ENCODE measurements at regions of chr12 and their contacts with region 1.

Region 1: DNA sequence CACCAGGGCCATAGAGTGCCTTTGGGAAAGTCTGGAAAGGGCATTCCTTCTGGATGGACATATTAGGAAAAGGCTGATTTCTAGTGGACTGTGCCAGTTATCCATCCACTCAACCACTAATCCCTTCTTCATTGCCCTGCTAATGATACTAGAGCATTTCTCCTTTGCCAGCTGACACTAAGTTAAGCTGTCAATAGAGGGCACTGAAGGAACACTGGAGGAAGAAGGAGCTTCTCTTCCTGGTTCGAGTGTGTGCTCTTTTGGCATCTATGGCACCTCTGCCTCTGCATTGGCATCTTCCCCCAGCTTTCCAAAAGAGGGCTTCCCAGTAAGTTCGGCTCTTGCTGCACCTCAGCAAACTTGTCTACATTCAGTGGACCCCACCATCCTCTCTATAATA is 165.4 kb downstream of the DERA start:
- DNase-seq: peak; percentile 90
- H3K4me3 ChIP-seq: no peak overlapping the region
- H3K27ac ChIP-seq: no peak overlapping the region
- H3K4me1 ChIP-seq: peaks cover under 1% of the 10 kb centered on the region
- H3K27me3 ChIP-seq: no peaks in the 10 kb centered on the region
- CTCF ChIP-seq: peak; percentile 84

Region 2: DNA sequence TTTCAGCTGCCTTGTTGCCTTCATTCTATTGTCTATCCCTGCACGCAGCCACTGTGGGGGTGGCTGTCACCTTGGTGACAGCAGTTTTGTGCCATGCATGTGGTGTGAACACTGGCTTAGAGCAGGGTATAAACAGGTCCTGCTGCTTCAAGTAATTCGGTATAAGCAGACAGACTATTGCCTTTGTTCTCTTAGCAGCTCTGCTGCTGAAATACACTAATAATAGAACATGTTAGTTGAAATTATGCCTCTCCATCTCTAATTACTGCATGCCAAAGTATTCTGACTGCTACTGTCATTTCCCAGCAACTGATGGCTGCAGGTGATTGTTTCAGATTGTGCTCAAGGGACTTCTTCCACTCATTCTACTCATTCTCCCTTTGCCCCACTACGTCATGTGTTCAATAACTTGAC is 719.6 kb before region 1 on chr12:
- CTCF ChIA-PET with region 1: no interaction called
- POLR2A ChIA-PET with region 1: no interaction called
- intact Hi-C with region 1: no loop called
- DNase-seq: no peak
- H3K4me3 ChIP-seq: no peak overlapping the region
- H3K27ac ChIP-seq: no peak overlapping the region
- H3K4me1 ChIP-seq: no peaks in the 10 kb centered on the region
- H3K27me3 ChIP-seq: no peaks in the 10 kb centered on the region
- CTCF ChIP-seq: no peak

Region 3: GRCh38 chr12:15979096-15980092 is 97.2 kb before region 1 on chr12:
- CTCF ChIA-PET with region 1: no interaction called
- POLR2A ChIA-PET with region 1: no interaction called
- intact Hi-C with region 1: loop called (anchors 2 kb)
- DNase-seq: peak; percentile 6
- H3K4me3 ChIP-seq: no peak overlapping the region
- H3K27ac ChIP-seq: no peak overlapping the region
- H3K4me1 ChIP-seq: peaks cover 12% of the 10 kb centered on the region
- H3K27me3 ChIP-seq: no peaks in the 10 kb centered on the region
- CTCF ChIP-seq: peak; percentile 49

Region 4: DNA sequence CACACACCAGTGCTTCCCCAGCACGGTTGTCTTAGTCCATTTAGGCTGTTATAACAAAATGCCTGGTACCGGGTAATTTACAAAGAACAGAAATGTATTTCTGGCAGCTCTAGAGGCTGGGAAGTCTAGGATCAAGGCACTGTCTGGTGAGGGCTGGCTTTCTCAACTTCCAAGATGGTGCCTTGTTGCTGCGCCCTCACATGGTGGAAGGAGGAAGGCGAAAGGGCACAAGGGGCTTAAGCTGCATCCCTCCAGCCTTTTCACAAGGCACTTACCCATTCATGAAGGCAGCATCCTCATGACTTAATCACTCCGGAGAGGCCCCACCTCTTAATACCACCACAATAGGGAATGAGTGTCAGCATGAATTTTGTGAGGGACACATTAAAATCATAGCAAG is 45.4 kb after region 1 on chr12:
- CTCF ChIA-PET with region 1: no interaction called
- POLR2A ChIA-PET with region 1: no interaction called
- intact Hi-C with region 1: no loop called
- DNase-seq: peak; percentile 22
- H3K4me3 ChIP-seq: no peak overlapping the region
- H3K27ac ChIP-seq: no peak overlapping the region
- H3K4me1 ChIP-seq: peaks cover 12% of the 10 kb centered on the region
- H3K27me3 ChIP-seq: no peaks in the 10 kb centered on the region
- CTCF ChIP-seq: 0 out of 2 replicates have a peak, but pooled peaks have one; percentile 26

Region 5: DNA sequence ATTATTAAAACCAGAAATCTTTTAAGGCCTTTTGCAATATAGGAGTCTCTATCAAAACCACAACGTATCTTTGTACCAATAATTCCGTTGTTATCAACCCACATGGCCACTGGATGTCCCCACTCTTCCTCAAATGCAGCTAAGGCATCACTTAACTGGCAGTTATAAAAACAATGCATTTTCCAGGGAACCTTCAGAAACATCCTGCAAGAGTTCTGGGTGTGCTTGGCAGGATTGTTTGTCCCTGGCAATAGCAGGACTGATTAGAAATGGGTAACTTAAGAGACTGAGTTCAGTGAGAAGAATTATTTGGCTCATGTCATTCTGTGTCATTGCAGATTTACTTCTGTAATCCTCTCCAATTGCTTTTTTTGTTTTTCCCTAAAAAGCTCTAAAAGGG is 89.0 kb after region 1 on chr12:
- CTCF ChIA-PET with region 1: interaction called, 3 read pairs
- POLR2A ChIA-PET with region 1: no interaction called
- intact Hi-C with region 1: loop called (anchors 1 kb)
- DNase-seq: peak; percentile 82
- H3K4me3 ChIP-seq: no peak overlapping the region
- H3K27ac ChIP-seq: no peak overlapping the region
- H3K4me1 ChIP-seq: peaks cover 20% of the 10 kb centered on the region
- H3K27me3 ChIP-seq: peaks cover 13% of the 10 kb centered on the region
- CTCF ChIP-seq: peak; percentile 77

Region 6: DNA sequence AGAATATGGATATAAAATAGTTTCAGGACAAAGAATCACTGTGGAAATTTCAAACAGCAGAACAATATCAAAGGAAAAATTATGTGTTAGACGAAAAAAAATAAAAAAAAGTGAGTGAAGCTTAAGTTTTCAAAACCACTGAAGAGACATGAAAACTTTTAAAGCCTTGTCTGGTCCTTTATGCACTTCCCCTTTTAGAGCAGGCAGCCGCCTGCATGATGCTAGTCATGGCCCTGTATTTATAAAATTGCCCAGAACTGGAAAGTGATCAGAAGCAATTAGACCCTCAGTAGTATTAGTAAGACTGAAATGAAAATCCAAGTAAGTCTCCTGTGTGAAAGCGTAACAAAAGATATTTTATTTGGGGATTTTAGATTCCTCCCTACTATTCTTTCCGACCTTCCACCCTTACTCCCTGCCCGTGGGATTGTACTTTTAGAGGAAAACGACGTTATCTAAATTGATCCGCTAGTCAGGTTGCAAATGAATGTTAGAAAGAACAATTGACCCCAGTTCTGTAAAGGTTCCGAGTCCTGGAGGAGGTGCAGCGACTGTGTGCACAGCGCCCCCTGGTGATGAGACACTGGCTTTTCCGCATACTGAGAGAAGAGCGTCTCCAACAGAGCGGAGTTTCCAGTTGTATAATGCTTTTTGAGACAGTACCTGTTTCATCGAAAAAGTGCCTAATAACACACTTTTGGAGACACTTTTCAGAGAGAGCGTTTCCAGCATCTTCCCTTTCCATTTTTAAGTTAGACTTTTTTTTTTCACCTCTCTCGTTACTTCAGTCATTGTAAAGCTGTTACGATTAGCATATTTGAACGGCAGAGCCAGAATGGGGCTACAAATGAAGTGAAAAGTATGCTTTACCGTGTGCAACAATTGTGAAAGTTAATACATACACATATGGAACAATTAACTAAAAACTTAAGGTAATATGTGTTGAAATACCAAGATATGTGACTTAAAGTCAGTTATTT is 283.2 kb after region 1 on chr12:
- CTCF ChIA-PET with region 1: no interaction called
- POLR2A ChIA-PET with region 1: no interaction called
- intact Hi-C with region 1: loop called (anchors 1 kb)
- DNase-seq: peak; percentile 77
- H3K4me3 ChIP-seq: no peak overlapping the region
- H3K27ac ChIP-seq: no peak overlapping the region
- H3K4me1 ChIP-seq: no peaks in the 10 kb centered on the region
- H3K27me3 ChIP-seq: no peaks in the 10 kb centered on the region
- CTCF ChIP-seq: peak; percentile 93

Region 7: DNA sequence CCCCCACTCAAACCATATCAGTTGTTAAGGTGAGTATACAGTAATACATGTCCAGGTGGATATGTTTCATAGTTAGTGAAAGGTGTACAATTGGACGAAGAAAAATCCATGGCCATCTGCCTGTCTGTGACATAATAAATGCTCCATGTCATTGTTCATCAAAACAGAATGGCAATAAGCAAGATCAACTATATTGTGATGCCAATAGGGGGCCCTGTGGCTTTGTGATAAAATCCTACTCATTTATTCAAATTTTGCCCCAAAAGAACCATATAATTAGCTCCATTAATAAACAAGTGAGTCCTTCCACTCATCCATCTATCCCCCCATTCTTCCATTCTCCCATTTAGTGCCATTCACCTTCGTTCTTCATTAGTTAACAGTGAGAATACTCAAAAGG is 372.9 kb after region 1 on chr12:
- CTCF ChIA-PET with region 1: no interaction called
- POLR2A ChIA-PET with region 1: no interaction called
- intact Hi-C with region 1: loop called (anchors 10 kb)
- DNase-seq: peak; percentile 7
- H3K4me3 ChIP-seq: no peak overlapping the region
- H3K27ac ChIP-seq: no peak overlapping the region
- H3K4me1 ChIP-seq: peaks cover 8% of the 10 kb centered on the region
- H3K27me3 ChIP-seq: no peaks in the 10 kb centered on the region
- CTCF ChIP-seq: peak; percentile 33; the same call in 1 of the 2 replicates

Region 8: GRCh38 chr12:17992002-17992656 is 1915.6 kb after region 1 on chr12:
- CTCF ChIA-PET with region 1: no interaction called
- POLR2A ChIA-PET with region 1: no interaction called
- intact Hi-C with region 1: loop called (anchors 10 kb)
- DNase-seq: peak; percentile 77
- H3K4me3 ChIP-seq: no peak overlapping the region
- H3K27ac ChIP-seq: no peak overlapping the region
- H3K4me1 ChIP-seq: no peaks in the 10 kb centered on the region
- H3K27me3 ChIP-seq: no peaks in the 10 kb centered on the region
- CTCF ChIP-seq: peak; percentile 88

Measured in A673 (cell line).